ENCODE measurements at regions of chr9 and their contacts with region 1.

Region 1: GRCh38 chr9:125854553-125855275 is 107.5 kb downstream of the PBX3 start:
- DNase-seq: no peak
- ATAC-seq: no peak
- H3K4me3 Mint-ChIP-seq: no peak overlapping the region
- H3K27ac Mint-ChIP-seq: no peak overlapping the region
- H3K4me1 Mint-ChIP-seq: peaks cover 5% of the 10 kb centered on the region
- H3K27me3 Mint-ChIP-seq: no peaks in the 10 kb centered on the region
- CTCF ChIP-seq: no peak

Region 2: GRCh38 chr9:125889476-125890419 is 35.0 kb after region 1 on chr9:
- CTCF ChIA-PET with region 1: no interaction called
- POLR2A ChIA-PET with region 1: no interaction called
- intact Hi-C with region 1: loop called (anchors 5 kb)
- DNase-seq: peak; percentile 54
- ATAC-seq: peak; percentile 88
- H3K4me3 Mint-ChIP-seq: peak overlapping the region; percentile 87
- H3K27ac Mint-ChIP-seq: no peak overlapping the region
- H3K4me1 Mint-ChIP-seq: peaks cover 23% of the 10 kb centered on the region
- H3K27me3 Mint-ChIP-seq: no peaks in the 10 kb centered on the region
- CTCF ChIP-seq: no peak

Region 3: GRCh38 chr9:125904155-125904851 is 49.6 kb after region 1 on chr9:
- CTCF ChIA-PET with region 1: no interaction called
- POLR2A ChIA-PET with region 1: no interaction called
- intact Hi-C with region 1: no loop called
- DNase-seq: no peak
- ATAC-seq: peak; percentile 21
- H3K4me3 Mint-ChIP-seq: peak overlapping the region; percentile 49
- H3K27ac Mint-ChIP-seq: peak overlapping the region; percentile 10
- H3K4me1 Mint-ChIP-seq: peaks cover 13% of the 10 kb centered on the region
- H3K27me3 Mint-ChIP-seq: no peaks in the 10 kb centered on the region
- CTCF ChIP-seq: no peak

Region 4: DNA sequence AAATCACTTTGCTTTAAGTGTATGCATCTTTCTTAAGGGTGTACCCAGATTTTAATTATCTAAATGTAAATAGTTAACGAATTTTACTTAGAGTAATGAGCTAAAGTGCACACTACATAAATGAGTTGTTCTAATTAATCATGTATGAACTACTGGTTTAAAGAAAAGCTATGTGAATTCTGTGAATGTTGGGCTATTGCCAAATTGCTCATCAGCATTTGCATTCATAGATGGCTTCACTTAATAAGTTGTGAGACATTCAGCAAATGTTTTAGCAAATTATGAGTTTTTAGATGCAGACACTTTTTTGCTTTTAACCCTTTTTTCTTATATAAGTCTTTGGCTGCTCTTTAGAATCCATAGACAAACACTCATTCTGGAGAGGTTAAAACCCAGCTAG is 68.1 kb after region 1 on chr9:
- CTCF ChIA-PET with region 1: no interaction called
- POLR2A ChIA-PET with region 1: no interaction called
- intact Hi-C with region 1: no loop called
- DNase-seq: no peak
- ATAC-seq: no peak
- H3K4me3 Mint-ChIP-seq: no peak overlapping the region
- H3K27ac Mint-ChIP-seq: no peak overlapping the region
- H3K4me1 Mint-ChIP-seq: no peaks in the 10 kb centered on the region
- H3K27me3 Mint-ChIP-seq: no peaks in the 10 kb centered on the region
- CTCF ChIP-seq: no peak